ENCODE measurements at regions of chr19 and their contacts with region 1.

Region 1: GRCh38 chr19:56538254-56538760 is 441 bp upstream of the ZFP28 start:
- DNase-seq: peak; percentile 96

Region 2: GRCh38 chr19:56393119-56394012 is 144.9 kb before region 1 on chr19 and contains the start of gene ZNF582:
- intact Hi-C with region 1: loop called (anchors 5 kb)
- DNase-seq: peak; percentile 95
- total RNA-seq, gene ZNF582: 4.9 TPM

Region 3: GRCh38 chr19:56477429-56478338 is 60.6 kb before region 1 on chr19:
- intact Hi-C with region 1: loop called (anchors 1 kb)
- DNase-seq: peak; percentile 94

Region 4: GRCh38 chr19:56507446-56508289 is 30.6 kb before region 1 on chr19 and contains the start of gene ZNF471:
- intact Hi-C with region 1: loop called (anchors 1 kb)
- DNase-seq: peak; percentile 98
- total RNA-seq, gene ZNF471: 7.2 TPM

Region 5: GRCh38 chr19:56567274-56568120 is 29.2 kb after region 1 on chr19 and contains the start of gene ZNF470:
- intact Hi-C with region 1: loop called (anchors 2 kb)
- DNase-seq: peak; percentile 96
- total RNA-seq, gene ZNF470: 6.6 TPM

Region 6: GRCh38 chr19:56594783-56595547 is 56.7 kb after region 1 on chr19 and contains the start of gene ZNF71:
- intact Hi-C with region 1: loop called (anchors 2 kb)
- DNase-seq: peak; percentile 92
- total RNA-seq, gene ZNF71: 7.1 TPM

Measured in cardiac septum (tissue), 1 donor.